ENCODE measurements at regions of chr13 and their contacts with region 1.

Region 1: GRCh38 chr13:53250266-53250875 is 221.8 kb downstream of the OLFM4 start:
- DNase-seq: peak; percentile 85
- H3K4me3 ChIP-seq: no peak overlapping the region
- H3K27ac ChIP-seq: no peak overlapping the region
- H3K4me1 ChIP-seq: no peaks in the 10 kb centered on the region
- H3K27me3 ChIP-seq: no peaks in the 10 kb centered on the region
- CTCF ChIP-seq: peak; percentile 94

Region 2: GRCh38 chr13:53121919-53122318 is 128.5 kb before region 1 on chr13:
- CTCF ChIA-PET with region 1: no interaction called
- POLR2A ChIA-PET with region 1: no interaction called
- intact Hi-C with region 1: no loop called
- DNase-seq: no peak
- H3K4me3 ChIP-seq: no peak overlapping the region
- H3K27ac ChIP-seq: no peak overlapping the region
- H3K4me1 ChIP-seq: no peaks in the 10 kb centered on the region
- H3K27me3 ChIP-seq: no peaks in the 10 kb centered on the region
- CTCF ChIP-seq: no peak

Region 3: DNA sequence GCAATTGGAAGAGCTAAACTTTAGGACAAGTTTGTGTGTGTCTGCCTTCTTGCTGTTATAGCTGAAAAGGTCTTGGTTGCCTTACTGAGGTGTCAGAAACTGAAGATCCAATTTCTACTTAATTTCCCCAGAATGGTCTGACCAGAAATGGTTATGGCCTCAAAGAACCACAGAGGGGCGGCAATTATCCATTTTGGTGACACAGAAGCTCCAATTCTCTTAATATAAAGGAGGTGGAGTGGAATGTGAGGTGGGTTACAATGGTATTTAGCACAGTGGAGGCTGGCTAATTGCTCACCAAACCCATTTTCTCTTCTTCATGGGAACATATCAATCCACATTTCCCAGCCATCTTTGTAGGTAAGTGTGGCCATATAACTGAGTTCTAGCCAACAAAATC is 935.4 kb after region 1 on chr13:
- CTCF ChIA-PET with region 1: no interaction called
- POLR2A ChIA-PET with region 1: no interaction called
- intact Hi-C with region 1: loop called (anchors 10 kb)
- DNase-seq: peak; percentile 41
- H3K4me3 ChIP-seq: no peak overlapping the region
- H3K27ac ChIP-seq: no peak overlapping the region
- H3K4me1 ChIP-seq: no peaks in the 10 kb centered on the region
- H3K27me3 ChIP-seq: no peaks in the 10 kb centered on the region
- CTCF ChIP-seq: peak; percentile 45; the same call in 1 of the 2 replicates

Region 4: GRCh38 chr13:55245005-55245644 is 1994.8 kb after region 1 on chr13:
- CTCF ChIA-PET with region 1: interaction called, 5 read pairs
- POLR2A ChIA-PET with region 1: no interaction called
- intact Hi-C with region 1: loop called (anchors 10 kb)
- DNase-seq: peak; percentile 36
- H3K4me3 ChIP-seq: no peak overlapping the region
- H3K27ac ChIP-seq: no peak overlapping the region
- H3K4me1 ChIP-seq: no peaks in the 10 kb centered on the region
- H3K27me3 ChIP-seq: no peaks in the 10 kb centered on the region
- CTCF ChIP-seq: peak; percentile 64

Measured in A673 (cell line).